MCF 10A (cell line): ENCODE measurements at regions of chr13 and their contacts with region 1.

Region 1: DNA sequence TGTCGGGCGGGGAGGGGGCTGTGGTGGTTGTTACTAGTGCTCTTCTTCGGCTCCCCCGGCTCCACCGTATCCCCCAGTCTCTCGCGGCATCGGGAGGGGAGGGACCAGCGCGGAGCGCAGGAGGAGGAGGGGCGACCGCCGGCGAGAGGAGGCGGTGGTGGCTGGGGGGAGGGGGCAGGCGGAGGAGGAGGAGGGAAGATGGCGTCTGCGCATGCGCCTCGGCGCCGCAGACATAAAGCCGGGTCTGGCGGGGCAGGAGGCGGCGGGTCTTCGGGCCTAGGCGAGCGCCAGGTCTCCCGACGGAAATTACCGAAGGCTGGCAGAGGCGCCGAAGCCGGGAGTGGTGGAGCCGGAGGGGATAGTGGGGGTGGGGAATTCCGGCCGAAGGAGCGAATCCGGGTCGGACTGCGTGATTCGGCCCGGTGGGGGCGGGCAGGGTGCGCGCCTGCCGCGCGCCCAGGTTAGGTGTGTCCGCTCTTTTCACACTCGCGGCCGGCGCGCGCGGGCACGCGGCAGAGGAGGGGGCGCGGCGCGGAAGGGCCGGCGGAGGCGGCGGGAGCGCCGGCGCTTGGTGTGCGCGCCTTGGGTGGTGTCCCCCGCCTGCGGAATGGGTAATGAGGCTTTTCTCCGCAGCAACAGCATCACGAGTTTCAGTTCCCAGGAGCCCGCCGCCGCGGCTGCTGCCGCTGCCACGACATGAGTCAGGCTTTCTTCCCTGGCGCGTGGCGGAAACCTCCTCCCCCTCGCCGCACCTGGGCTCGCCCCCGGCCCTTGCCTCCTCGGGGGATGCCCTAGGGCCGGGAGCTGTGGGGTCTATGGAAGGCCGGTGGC is 1.3 kb upstream of the TSC22D1 start:
- DNase-seq: peak; percentile 94
- H3K4me3 Mint-ChIP-seq: peak overlapping the region; percentile 88
- H3K27ac Mint-ChIP-seq: peak overlapping the region; percentile 89
- H3K4me1 Mint-ChIP-seq: peaks cover 32% of the 10 kb centered on the region
- H3K27me3 Mint-ChIP-seq: no peaks in the 10 kb centered on the region
- CTCF ChIP-seq: no peak

Region 2: GRCh38 chr13:43963726-43964125 is 613.7 kb before region 1 on chr13:
- CTCF ChIA-PET with region 1: no interaction called
- POLR2A ChIA-PET with region 1: no interaction called
- intact Hi-C with region 1: no loop called
- DNase-seq: peak; percentile 2
- H3K4me3 Mint-ChIP-seq: no peak overlapping the region
- H3K27ac Mint-ChIP-seq: no peak overlapping the region
- H3K4me1 Mint-ChIP-seq: no peaks in the 10 kb centered on the region
- H3K27me3 Mint-ChIP-seq: no peaks in the 10 kb centered on the region
- CTCF ChIP-seq: no peak

Region 3: GRCh38 chr13:44484562-44485138 is 92.8 kb before region 1 on chr13:
- CTCF ChIA-PET with region 1: interaction called, 6 read pairs
- POLR2A ChIA-PET with region 1: interaction called, 4 read pairs
- intact Hi-C with region 1: loop called (anchors 2 kb)
- DNase-seq: no peak
- H3K4me3 Mint-ChIP-seq: no peak overlapping the region
- H3K27ac Mint-ChIP-seq: no peak overlapping the region
- H3K4me1 Mint-ChIP-seq: no peaks in the 10 kb centered on the region
- H3K27me3 Mint-ChIP-seq: no peaks in the 10 kb centered on the region
- CTCF ChIP-seq: no peak

Region 4: DNA sequence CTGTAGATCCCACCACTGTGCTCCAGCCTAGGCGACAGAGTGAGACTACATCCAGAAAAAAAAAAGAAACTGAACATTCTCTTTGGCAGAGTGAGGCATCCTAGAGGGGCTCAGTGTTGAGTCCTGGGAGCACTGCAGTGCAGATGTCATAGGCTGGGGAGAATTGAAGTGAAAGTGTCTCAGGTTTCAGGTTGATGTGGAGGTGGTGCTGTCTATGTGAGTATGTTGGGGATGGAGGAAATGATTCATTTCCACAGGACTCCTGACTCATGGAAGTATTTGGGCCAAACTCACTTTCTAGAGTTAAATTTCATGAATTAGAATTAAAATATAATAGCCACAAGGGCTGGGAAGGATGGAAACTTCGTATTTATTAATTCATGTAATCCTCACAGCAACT is 133.1 kb after region 1 on chr13:
- CTCF ChIA-PET with region 1: interaction called, 4 read pairs
- POLR2A ChIA-PET with region 1: no interaction called
- intact Hi-C with region 1: loop called (anchors 5 kb)
- DNase-seq: peak; percentile 90
- H3K4me3 Mint-ChIP-seq: no peak overlapping the region
- H3K27ac Mint-ChIP-seq: peak overlapping the region; percentile 75
- H3K4me1 Mint-ChIP-seq: peaks cover 35% of the 10 kb centered on the region
- H3K27me3 Mint-ChIP-seq: no peaks in the 10 kb centered on the region
- CTCF ChIP-seq: no peak

Region 5: GRCh38 chr13:44815623-44816022 is 238.2 kb after region 1 on chr13:
- CTCF ChIA-PET with region 1: interaction called, 3 read pairs
- POLR2A ChIA-PET with region 1: interaction called, 4 read pairs
- intact Hi-C with region 1: loop called (anchors 2 kb)
- DNase-seq: peak; percentile 93
- H3K4me3 Mint-ChIP-seq: no peak overlapping the region
- H3K27ac Mint-ChIP-seq: peak overlapping the region; percentile 37
- H3K4me1 Mint-ChIP-seq: peaks cover 45% of the 10 kb centered on the region
- H3K27me3 Mint-ChIP-seq: no peaks in the 10 kb centered on the region
- CTCF ChIP-seq: no peak

Region 6: DNA sequence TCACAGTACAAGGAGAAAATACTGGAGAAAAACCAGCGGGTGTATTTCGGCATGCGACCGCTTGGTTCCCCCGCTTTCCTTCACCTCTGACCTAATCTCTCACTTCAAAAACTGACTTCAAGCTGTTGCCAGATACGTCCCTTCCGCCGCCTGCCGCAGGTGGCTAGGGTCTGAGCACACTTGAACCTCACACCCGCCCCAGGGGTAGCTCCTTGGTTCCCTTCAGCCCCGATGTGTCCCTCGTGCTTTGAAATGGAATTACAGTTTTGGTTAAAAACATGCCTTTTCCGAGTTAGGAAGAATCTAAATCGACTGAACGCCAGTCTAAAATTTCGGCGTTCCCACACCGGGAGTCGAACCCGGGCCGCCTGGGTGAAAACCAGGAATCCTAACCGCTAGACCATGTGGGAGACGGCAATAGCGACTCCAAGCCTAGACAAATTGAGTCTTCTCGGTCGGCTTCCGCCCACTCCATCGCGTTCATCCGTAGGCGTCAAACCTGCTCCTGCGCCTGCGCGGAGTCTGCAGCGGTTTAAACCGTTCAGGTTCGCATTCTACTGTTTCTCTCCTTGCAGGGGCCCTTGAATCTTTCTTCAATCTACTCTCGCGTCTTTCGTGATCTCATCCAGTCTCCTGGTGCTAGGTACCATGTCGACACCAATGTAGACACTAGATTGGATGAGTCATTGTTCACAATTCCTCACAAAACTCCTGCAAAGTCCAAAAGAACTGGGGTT is 340.3 kb after region 1 on chr13:
- CTCF ChIA-PET with region 1: no interaction called
- POLR2A ChIA-PET with region 1: interaction called, 4 read pairs
- intact Hi-C with region 1: loop called (anchors 1 kb)
- DNase-seq: peak; percentile 96
- H3K4me3 Mint-ChIP-seq: no peak overlapping the region
- H3K27ac Mint-ChIP-seq: no peak overlapping the region
- H3K4me1 Mint-ChIP-seq: peaks cover 18% of the 10 kb centered on the region
- H3K27me3 Mint-ChIP-seq: no peaks in the 10 kb centered on the region
- CTCF ChIP-seq: peak; percentile 54